ENCODE measurements at regions of chr4 and their contacts with region 1.

Region 1: GRCh38 chr4:123976285-123976684 is 579.7 kb downstream of the SPRY1 start:
- DNase-seq: no peak
- ATAC-seq: peak; percentile 42

Region 2: GRCh38 chr4:123939621-123940020 is 36.7 kb before region 1 on chr4:
- intact Hi-C with region 1: loop called (anchors 5 kb)
- DNase-seq: no peak
- ATAC-seq: peak; percentile 26